ENCODE measurements at regions of chr6 and their contacts with region 1.

Region 1: DNA sequence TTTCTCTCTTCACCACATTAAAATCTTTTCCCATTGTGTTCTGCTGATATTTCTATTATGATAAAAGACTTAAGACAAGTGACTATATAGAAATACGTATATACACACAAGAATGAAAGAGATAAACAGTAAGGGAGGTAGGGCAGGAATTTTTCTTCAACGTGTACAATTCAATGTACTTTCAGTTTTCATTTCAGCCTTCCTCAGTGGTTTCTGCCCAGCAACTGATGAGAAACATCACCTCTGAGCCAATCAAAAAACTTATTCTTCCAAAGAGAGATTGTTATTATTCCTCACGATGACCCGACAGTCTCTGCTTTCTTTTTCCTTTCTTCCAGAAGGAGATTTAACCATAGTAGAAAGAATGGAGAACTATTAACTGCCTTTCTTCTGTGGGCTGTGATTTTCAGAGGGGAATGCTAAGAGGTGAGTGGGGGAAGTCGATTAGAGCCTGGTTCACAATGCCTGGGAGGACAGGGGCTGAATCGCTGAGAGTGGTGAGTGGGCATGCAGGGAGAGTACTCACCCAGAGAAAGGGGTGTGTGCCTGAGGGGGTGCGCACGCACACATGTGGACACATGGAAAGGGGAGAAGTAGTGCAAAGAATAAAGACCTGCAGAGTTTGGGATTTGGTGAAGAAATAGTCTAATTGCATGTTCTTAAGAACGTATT is at the start of gene BTN3A1:
- DNase-seq: peak; percentile 81
- ATAC-seq: peak; percentile 95
- H3K4me3 Mint-ChIP-seq: peak within 1 kb of the TSS; percentile 99
- H3K27ac Mint-ChIP-seq: peak within 1 kb of the TSS; percentile 97
- H3K4me1 Mint-ChIP-seq: peaks cover 48% of the 10 kb centered on the region
- H3K27me3 Mint-ChIP-seq: no peaks in the 10 kb centered on the region
- total RNA-seq, gene BTN3A1: 31.4 to 33.2 TPM

Region 2: GRCh38 chr6:26366504-26366903 is 35.6 kb before region 1 on chr6:
- CTCF ChIA-PET with region 1: no interaction called
- POLR2A ChIA-PET with region 1: no interaction called
- intact Hi-C with region 1: loop called (anchors 1 to 5 kb)
- DNase-seq: no peak
- ATAC-seq: no peak
- H3K4me3 Mint-ChIP-seq: no peak overlapping the region
- H3K27ac Mint-ChIP-seq: peak overlapping the region; percentile 61
- H3K4me1 Mint-ChIP-seq: peaks cover 58% of the 10 kb centered on the region
- H3K27me3 Mint-ChIP-seq: no peaks in the 10 kb centered on the region

Region 3: GRCh38 chr6:26383624-26384417 is 18.3 kb before region 1 on chr6:
- CTCF ChIA-PET with region 1: no interaction called
- POLR2A ChIA-PET with region 1: no interaction called
- intact Hi-C with region 1: loop called in 1 of 2 experiments (anchors 1 kb)
- DNase-seq: peak; percentile 57
- ATAC-seq: peak; percentile 54
- H3K4me3 Mint-ChIP-seq: peak overlapping the region; percentile 85
- H3K27ac Mint-ChIP-seq: peak overlapping the region; percentile 92
- H3K4me1 Mint-ChIP-seq: peaks cover 14% of the 10 kb centered on the region
- H3K27me3 Mint-ChIP-seq: no peaks in the 10 kb centered on the region

Region 4: DNA sequence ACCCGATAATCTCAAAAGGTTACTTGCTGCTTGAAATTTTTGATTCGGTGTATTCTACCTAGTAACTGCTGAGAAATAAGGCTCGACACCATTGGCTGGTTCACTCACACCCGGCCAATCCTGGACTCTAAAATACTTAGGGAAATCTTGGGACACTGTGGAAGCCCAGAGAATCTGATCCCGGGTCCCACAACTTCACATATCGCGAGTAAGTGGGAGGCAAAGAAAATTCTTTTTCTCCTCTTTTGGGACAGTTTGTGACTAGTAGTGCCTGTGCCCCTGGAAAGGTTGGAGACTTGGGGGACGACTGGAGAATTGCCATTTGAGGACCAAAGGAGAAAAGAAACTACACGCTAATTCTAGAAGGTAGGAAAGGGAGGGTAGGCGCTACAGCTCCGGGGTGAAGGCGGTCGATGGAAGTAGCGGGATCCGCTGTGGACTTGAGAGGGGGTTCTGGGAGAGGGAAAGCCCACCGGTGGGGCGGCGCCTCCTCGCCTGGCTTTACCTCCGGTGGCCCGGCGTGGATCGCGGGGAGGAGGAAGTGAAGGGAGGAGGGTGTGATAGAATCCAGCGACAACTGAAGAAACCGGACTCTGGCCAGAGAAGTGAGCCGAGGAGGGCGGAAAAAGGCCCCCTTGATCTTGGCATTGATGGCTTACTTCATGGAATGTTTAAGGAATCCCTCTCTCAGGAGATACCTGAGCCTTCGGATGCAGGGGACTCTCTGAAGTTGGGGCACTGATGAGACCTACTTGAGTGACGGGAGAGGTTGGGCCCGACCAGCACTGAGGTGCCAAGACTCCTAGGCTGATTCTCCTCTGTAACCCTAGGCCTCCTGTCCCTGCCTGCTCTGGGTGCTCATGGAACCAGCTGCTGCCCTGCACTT is 19.4 kb after region 1 on chr6:
- CTCF ChIA-PET with region 1: interaction called, 3 read pairs
- POLR2A ChIA-PET with region 1: interaction called, 3 read pairs
- intact Hi-C with region 1: loop called (anchors 1 kb)
- DNase-seq: peak; percentile 62
- ATAC-seq: peak; percentile 97
- H3K4me3 Mint-ChIP-seq: no peak overlapping the region
- H3K27ac Mint-ChIP-seq: no peak overlapping the region
- H3K4me1 Mint-ChIP-seq: peaks cover 5% of the 10 kb centered on the region
- H3K27me3 Mint-ChIP-seq: no peaks in the 10 kb centered on the region

Region 5: DNA sequence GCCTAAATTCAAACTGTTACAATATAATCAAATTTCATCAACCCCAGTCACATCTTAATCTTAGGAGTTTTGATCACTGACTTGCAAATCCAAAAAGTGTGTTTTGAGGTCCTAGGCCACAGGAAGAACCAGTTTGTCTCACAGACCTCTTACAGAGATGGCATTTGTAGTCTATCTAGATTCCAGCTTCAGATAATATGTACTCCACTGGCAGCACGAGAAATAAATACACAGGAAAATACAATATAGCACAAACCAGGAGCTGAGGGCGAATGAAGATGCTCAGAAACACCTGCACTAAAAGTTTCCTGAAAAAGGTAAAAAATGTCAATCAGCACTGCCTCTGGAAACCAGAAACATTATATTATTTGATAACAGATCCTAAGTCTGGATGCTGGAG is 37.5 kb after region 1 on chr6:
- CTCF ChIA-PET with region 1: no interaction called
- POLR2A ChIA-PET with region 1: interaction called, 6 read pairs
- intact Hi-C with region 1: loop called in 1 of 2 experiments (anchors 1 kb)
- DNase-seq: no peak
- ATAC-seq: no peak
- H3K4me3 Mint-ChIP-seq: peak overlapping the region; percentile 96
- H3K27ac Mint-ChIP-seq: peak overlapping the region; percentile 98
- H3K4me1 Mint-ChIP-seq: peaks cover 40% of the 10 kb centered on the region
- H3K27me3 Mint-ChIP-seq: no peaks in the 10 kb centered on the region

Region 6: GRCh38 chr6:26457806-26458688 is 55.9 kb after region 1 on chr6 and contains the start of gene BTN2A1:
- CTCF ChIA-PET with region 1: no interaction called
- POLR2A ChIA-PET with region 1: no interaction called
- intact Hi-C with region 1: loop called in 1 of 2 experiments (anchors 1 kb)
- DNase-seq: peak; percentile 76
- ATAC-seq: peak; percentile 99
- H3K4me3 Mint-ChIP-seq: peak within 1 kb of the TSS; percentile 87
- H3K27ac Mint-ChIP-seq: peak within 1 kb of the TSS; percentile 97
- H3K4me1 Mint-ChIP-seq: peaks cover 45% of the 10 kb centered on the region
- H3K27me3 Mint-ChIP-seq: no peaks in the 10 kb centered on the region
- total RNA-seq, gene BTN2A1: 17.3 to 17.5 TPM

Measured in activated CD4-positive, alpha-beta T cell treated with anti-CD3 and anti-CD28 coated beads for 36 hours (primary cell).